H1 (cell line): ENCODE measurements at regions of chr1 and their contacts with region 1.

Region 1: DNA sequence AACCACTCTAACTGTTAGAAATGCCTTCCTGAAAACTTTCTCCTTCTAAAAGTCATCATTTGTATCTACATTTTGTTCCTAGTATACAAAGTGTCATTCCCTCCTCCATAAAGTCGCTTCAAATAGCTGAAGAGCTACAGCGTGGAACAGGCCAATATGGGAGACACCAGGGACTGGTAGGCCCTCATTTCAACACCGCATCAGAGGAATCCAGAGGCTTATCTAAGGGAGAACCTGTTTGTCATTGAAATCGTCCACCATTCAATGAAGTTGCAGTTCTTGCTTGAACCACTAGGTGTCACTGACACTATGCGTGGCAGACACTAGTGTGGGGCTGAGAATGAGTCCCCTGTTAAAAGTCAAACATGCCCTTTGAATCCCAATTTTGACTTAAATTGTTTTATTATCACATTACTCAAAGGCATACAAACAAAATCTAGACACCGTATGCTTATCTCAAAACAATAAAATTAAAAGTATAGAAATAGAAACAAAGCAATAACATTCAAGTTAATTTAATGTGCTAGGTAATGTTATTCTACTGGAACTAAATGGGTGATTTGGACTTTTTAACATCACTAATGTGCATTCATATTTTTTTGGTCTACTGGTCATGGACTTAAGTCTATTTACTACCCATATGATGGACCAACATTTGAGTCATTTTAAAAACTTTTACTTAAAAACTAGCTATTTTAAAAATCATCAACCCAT is 182.3 kb downstream of the FCRL5 start:
- DNase-seq: peak in 1 of 2 experiments; percentile 69
- H3K4me3 ChIP-seq: no peak overlapping the region
- H3K27ac ChIP-seq: no peak overlapping the region
- H3K4me1 ChIP-seq: no peaks in the 10 kb centered on the region; a peak in 1 of 7 replicates
- H3K27me3 ChIP-seq: no peaks in the 10 kb centered on the region
- CTCF ChIP-seq: peak; percentile 24 to 84 (median 77)
- EP300 ChIP-seq: no peak
- POLR2A ChIP-seq: no peak
- RAD21 ChIP-seq: peak; percentile 82 to 84

Region 2: GRCh38 chr1:156980551-156980950 is 389.4 kb before region 1 on chr1:
- CTCF ChIA-PET with region 1: no interaction called
- POLR2A ChIA-PET with region 1: no interaction called
- DNase-seq: no peak
- H3K4me3 ChIP-seq: no peak overlapping the region
- H3K27ac ChIP-seq: no peak overlapping the region
- H3K4me1 ChIP-seq: peaks cover 0 to 3% (median 1%) of the 10 kb centered on the region in 4 experiments; a peak in 3 of 7 replicates
- H3K27me3 ChIP-seq: no peaks in the 10 kb centered on the region; a peak in 1 of 7 replicates
- CTCF ChIP-seq: no peak
- EP300 ChIP-seq: no peak
- POLR2A ChIP-seq: no peak
- RAD21 ChIP-seq: no peak

Region 3: GRCh38 chr1:157176591-157177121 is 193.3 kb before region 1 on chr1:
- CTCF ChIA-PET with region 1: interaction called, 10 read pairs
- POLR2A ChIA-PET with region 1: no interaction called
- DNase-seq: no peak
- H3K4me3 ChIP-seq: no peak overlapping the region
- H3K27ac ChIP-seq: no peak overlapping the region
- H3K4me1 ChIP-seq: peaks cover 0 to 3% (median 2%) of the 10 kb centered on the region in 4 experiments; a peak in 2 of 7 replicates
- H3K27me3 ChIP-seq: 0 out of 7 replicates have a peak, but pooled peaks cover 0 to 3% (median 0%) of the 10 kb centered on the region in 4 experiments
- CTCF ChIP-seq: no peak
- EP300 ChIP-seq: no peak
- POLR2A ChIP-seq: no peak
- RAD21 ChIP-seq: no peak

Region 4: DNA sequence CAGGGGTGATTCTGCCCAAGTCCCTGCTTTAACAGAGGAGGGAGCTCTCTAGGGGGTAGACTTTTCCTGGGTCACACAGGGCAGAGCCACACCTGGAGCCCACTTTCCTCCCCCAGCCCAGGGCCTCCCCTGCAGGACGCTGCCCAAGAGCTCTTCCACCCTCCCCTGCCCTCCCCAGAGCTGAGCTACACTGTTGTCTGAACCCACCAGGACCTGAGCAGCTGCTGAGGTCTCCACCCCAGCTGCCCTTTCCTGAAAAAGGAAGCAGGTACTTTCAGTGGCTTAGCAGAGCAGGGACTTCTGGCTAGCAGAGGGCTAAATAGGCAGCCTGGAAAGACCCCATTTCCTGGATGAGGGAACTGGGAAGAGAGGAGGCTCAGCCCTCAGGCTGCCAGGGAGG is 62.5 kb before region 1 on chr1:
- CTCF ChIA-PET with region 1: interaction called, 17 read pairs
- POLR2A ChIA-PET with region 1: no interaction called
- DNase-seq: no peak
- H3K4me3 ChIP-seq: no peak overlapping the region
- H3K27ac ChIP-seq: no peak overlapping the region
- H3K4me1 ChIP-seq: peaks cover 0 to 7% (median 3%) of the 10 kb centered on the region in 4 experiments; a peak in 3 of 7 replicates
- H3K27me3 ChIP-seq: peaks cover 0 to 1% (median 0%) of the 10 kb centered on the region in 4 experiments; a peak in 1 of 7 replicates
- CTCF ChIP-seq: no peak
- EP300 ChIP-seq: no peak
- POLR2A ChIP-seq: no peak
- RAD21 ChIP-seq: no peak

Region 5: DNA sequence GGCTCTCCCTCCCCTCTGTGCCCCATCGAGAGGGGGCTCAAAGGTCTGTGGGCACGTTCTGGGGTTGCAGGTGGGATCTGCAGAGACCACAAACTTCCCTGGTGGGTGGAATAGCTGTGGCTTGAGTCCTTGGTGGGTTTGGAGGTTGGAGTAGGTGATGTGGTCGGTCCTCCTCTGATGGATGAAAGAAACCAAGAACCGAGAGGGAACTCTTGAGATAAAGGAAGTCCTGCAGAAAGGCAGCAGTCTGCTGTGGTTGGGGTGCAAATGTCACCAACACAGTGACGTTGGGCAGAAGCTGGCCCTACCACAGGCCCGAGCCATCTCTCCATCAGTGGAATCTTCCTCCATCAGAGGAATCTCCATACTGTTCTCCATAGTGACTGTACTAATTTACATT is 10.6 kb after region 1 on chr1:
- CTCF ChIA-PET with region 1: interaction called, 15 read pairs
- POLR2A ChIA-PET with region 1: no interaction called
- DNase-seq: no peak
- H3K4me3 ChIP-seq: no peak overlapping the region
- H3K27ac ChIP-seq: no peak overlapping the region
- H3K4me1 ChIP-seq: no peaks in the 10 kb centered on the region; a peak in 1 of 7 replicates
- H3K27me3 ChIP-seq: no peaks in the 10 kb centered on the region
- CTCF ChIP-seq: no peak
- EP300 ChIP-seq: no peak
- POLR2A ChIP-seq: no peak
- RAD21 ChIP-seq: no peak

Region 6: GRCh38 chr1:157490467-157491165 is 120.7 kb after region 1 on chr1:
- CTCF ChIA-PET with region 1: interaction called, 17 read pairs
- POLR2A ChIA-PET with region 1: no interaction called
- DNase-seq: peak; percentile 43 to 95
- H3K4me3 ChIP-seq: no peak overlapping the region; a peak in 1 of 8 replicates
- H3K27ac ChIP-seq: no peak overlapping the region
- H3K4me1 ChIP-seq: peaks cover 0 to 3% (median 0%) of the 10 kb centered on the region in 4 experiments; a peak in 1 of 7 replicates
- H3K27me3 ChIP-seq: no peaks in the 10 kb centered on the region; a peak in 2 of 7 replicates
- CTCF ChIP-seq: peak; percentile 56 to 89 (median 68)
- EP300 ChIP-seq: no peak
- POLR2A ChIP-seq: no peak
- RAD21 ChIP-seq: peak; percentile 76 to 80

Region 7: GRCh38 chr1:157505481-157506272 is 135.7 kb after region 1 on chr1:
- CTCF ChIA-PET with region 1: interaction called, 12 read pairs
- POLR2A ChIA-PET with region 1: no interaction called
- DNase-seq: peak; percentile 34 to 64
- H3K4me3 ChIP-seq: no peak overlapping the region
- H3K27ac ChIP-seq: no peak overlapping the region
- H3K4me1 ChIP-seq: no peaks in the 10 kb centered on the region
- H3K27me3 ChIP-seq: no peaks in the 10 kb centered on the region
- CTCF ChIP-seq: peak; percentile 68 to 91 (median 88)
- EP300 ChIP-seq: no peak
- POLR2A ChIP-seq: no peak
- RAD21 ChIP-seq: peak; percentile 79 to 86